WTC11 (cell line): ENCODE measurements at regions of chr17 and their contacts with region 1.

Region 1: GRCh38 chr17:2025622-2026310 is 632 bp upstream of the RTN4RL1 start:
- DNase-seq: peak; percentile 62
- ATAC-seq: no peak
- H3K4me3 Mint-ChIP-seq: peak overlapping the region; percentile 67
- H3K27ac Mint-ChIP-seq: no peak overlapping the region
- H3K4me1 Mint-ChIP-seq: peaks cover 4% of the 10 kb centered on the region
- H3K27me3 Mint-ChIP-seq: peaks cover 85% of the 10 kb centered on the region
- CTCF ChIP-seq: no peak

Region 2: GRCh38 chr17:1865252-1866037 is 160.3 kb before region 1 on chr17:
- CTCF ChIA-PET with region 1: no interaction called
- POLR2A ChIA-PET with region 1: no interaction called
- DNase-seq: peak; percentile 37
- ATAC-seq: no peak
- H3K4me3 Mint-ChIP-seq: no peak overlapping the region
- H3K27ac Mint-ChIP-seq: no peak overlapping the region
- H3K4me1 Mint-ChIP-seq: no peaks in the 10 kb centered on the region
- H3K27me3 Mint-ChIP-seq: no peaks in the 10 kb centered on the region
- CTCF ChIP-seq: peak; percentile 46

Region 3: GRCh38 chr17:1931759-1932579 is 93.8 kb before region 1 on chr17:
- CTCF ChIA-PET with region 1: interaction called, 19 read pairs
- POLR2A ChIA-PET with region 1: interaction called, 3 read pairs
- DNase-seq: peak; percentile 73
- ATAC-seq: peak; percentile 91
- H3K4me3 Mint-ChIP-seq: peak overlapping the region; percentile 47
- H3K27ac Mint-ChIP-seq: no peak overlapping the region
- H3K4me1 Mint-ChIP-seq: 0 out of 2 replicates have a peak, but pooled peaks cover 2% of the 10 kb centered on the region
- H3K27me3 Mint-ChIP-seq: peaks cover 16% of the 10 kb centered on the region
- CTCF ChIP-seq: no peak

Region 4: GRCh38 chr17:2064980-2065785 is 39.4 kb after region 1 on chr17:
- CTCF ChIA-PET with region 1: no interaction called
- POLR2A ChIA-PET with region 1: no interaction called
- DNase-seq: peak; percentile 90
- ATAC-seq: peak; percentile 85
- H3K4me3 Mint-ChIP-seq: no peak overlapping the region
- H3K27ac Mint-ChIP-seq: peak overlapping the region; percentile 74; the same call in 1 of the 2 replicates
- H3K4me1 Mint-ChIP-seq: peaks cover 31% of the 10 kb centered on the region
- H3K27me3 Mint-ChIP-seq: peaks cover 13% of the 10 kb centered on the region
- CTCF ChIP-seq: peak; percentile 65